Activated CD8-positive, alpha-beta T cell treated with anti-CD3 and anti-CD28 coated beads for 36 hours (primary cell): ENCODE measurements at regions of chr20 and their contacts with region 1.

Region 1: DNA sequence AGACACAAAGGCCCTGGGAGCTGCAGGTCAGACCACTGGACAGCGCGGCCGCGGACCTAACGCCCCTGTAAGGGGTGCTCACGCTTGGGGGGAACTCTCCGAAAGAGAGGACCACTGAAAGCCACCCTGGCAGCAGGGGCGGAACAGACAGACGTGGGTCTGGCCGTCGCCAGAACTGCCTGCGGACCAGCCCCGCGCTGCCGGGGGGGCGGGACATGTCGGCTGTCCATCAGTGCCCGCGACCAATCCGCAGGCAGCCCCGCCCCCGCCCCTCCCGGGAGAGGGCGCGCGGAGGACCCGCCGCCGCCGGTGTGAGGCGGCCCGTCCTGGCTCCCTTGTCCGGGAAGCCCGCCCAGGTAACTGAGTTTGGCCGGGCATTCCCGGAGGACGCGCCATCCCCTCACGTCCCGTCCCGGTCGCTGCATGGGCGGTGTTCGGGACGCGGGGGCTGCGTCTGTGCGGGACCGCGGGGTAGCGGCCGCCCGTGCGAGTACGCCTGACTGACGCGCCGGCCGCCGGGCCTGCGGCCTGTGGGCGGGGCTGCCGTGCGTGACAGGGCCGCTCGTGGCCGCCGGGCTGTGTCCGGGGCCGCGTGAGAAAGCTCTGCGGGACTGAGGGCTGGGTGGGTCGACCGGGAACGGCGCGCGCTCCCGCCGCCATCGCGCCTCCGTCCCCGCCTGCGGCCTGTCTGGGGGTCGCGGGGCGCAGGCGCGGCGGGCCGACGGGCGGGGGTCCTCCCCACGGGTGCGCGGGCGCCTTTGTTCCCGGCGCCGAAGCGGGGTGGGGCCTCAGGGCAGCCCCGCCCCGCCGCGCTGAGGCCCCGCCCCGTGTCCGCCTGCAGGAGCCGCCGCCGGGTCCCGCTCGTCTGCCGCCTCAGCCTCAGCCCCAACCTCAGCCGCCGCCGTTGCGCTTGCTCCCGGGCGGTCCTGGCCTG is at the start of gene PLCG1:
- DNase-seq: peak; percentile 90
- ATAC-seq: peak; percentile 68
- H3K4me3 Mint-ChIP-seq: peak within 1 kb of the TSS; percentile 91
- H3K27ac Mint-ChIP-seq: peak within 1 kb of the TSS; percentile 91
- H3K4me1 Mint-ChIP-seq: peaks cover 64% of the 10 kb centered on the region
- H3K27me3 Mint-ChIP-seq: no peaks in the 10 kb centered on the region
- CTCF ChIP-seq: no peak
- total RNA-seq, gene PLCG1: 259 to 260 TPM

Region 2: DNA sequence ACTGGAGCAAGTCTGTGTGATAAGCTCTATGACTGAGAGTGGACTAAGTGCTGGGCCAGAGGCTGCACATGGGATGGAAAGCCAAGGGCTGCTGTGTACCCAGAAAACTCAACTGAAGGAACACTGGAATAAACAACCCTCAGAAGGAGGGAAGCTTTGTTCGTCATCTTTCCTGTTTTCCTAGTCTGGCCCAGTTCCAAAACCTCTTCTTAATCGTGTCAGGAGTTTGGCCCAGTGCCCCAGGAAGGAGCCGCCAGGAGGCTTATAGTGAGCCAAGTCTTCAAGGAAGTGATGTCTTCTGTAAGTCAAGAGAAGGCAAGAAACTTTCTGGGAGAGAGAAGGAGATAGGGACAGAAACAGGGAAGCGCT is 131.6 kb before region 1 on chr20:
- CTCF ChIA-PET with region 1: no interaction called
- POLR2A ChIA-PET with region 1: no interaction called
- intact Hi-C with region 1: no loop called
- DNase-seq: no peak
- ATAC-seq: no peak
- H3K4me3 Mint-ChIP-seq: no peak overlapping the region
- H3K27ac Mint-ChIP-seq: no peak overlapping the region
- H3K4me1 Mint-ChIP-seq: peaks cover 35% of the 10 kb centered on the region
- H3K27me3 Mint-ChIP-seq: no peaks in the 10 kb centered on the region
- CTCF ChIP-seq: no peak

Region 3: GRCh38 chr20:41125530-41126457 is 11.2 kb before region 1 on chr20:
- CTCF ChIA-PET with region 1: interaction called, 15 read pairs
- POLR2A ChIA-PET with region 1: interaction called, 3 read pairs
- intact Hi-C with region 1: no loop called
- DNase-seq: no peak
- ATAC-seq: no peak
- H3K4me3 Mint-ChIP-seq: no peak overlapping the region
- H3K27ac Mint-ChIP-seq: peak overlapping the region; percentile 46
- H3K4me1 Mint-ChIP-seq: peaks cover 6% of the 10 kb centered on the region
- H3K27me3 Mint-ChIP-seq: no peaks in the 10 kb centered on the region
- CTCF ChIP-seq: no peak

Region 4: GRCh38 chr20:41161886-41162285 is 24.9 kb after region 1 on chr20:
- CTCF ChIA-PET with region 1: interaction called, 209 read pairs
- POLR2A ChIA-PET with region 1: interaction called, 361 read pairs
- intact Hi-C with region 1: loop called (anchors 2 kb)
- DNase-seq: no peak
- ATAC-seq: no peak
- H3K4me3 Mint-ChIP-seq: peak overlapping the region; percentile 25
- H3K27ac Mint-ChIP-seq: peak overlapping the region; percentile 84
- H3K4me1 Mint-ChIP-seq: peaks cover 86% of the 10 kb centered on the region
- H3K27me3 Mint-ChIP-seq: no peaks in the 10 kb centered on the region
- CTCF ChIP-seq: no peak

Region 5: GRCh38 chr20:41173161-41173721 is 36.3 kb after region 1 on chr20:
- CTCF ChIA-PET with region 1: interaction called, 33 read pairs
- POLR2A ChIA-PET with region 1: interaction called, 7 read pairs
- intact Hi-C with region 1: no loop called
- DNase-seq: peak; percentile 75
- ATAC-seq: peak; percentile 74
- H3K4me3 Mint-ChIP-seq: no peak overlapping the region
- H3K27ac Mint-ChIP-seq: peak overlapping the region; percentile 56
- H3K4me1 Mint-ChIP-seq: peaks cover 25% of the 10 kb centered on the region
- H3K27me3 Mint-ChIP-seq: no peaks in the 10 kb centered on the region
- CTCF ChIP-seq: peak; percentile 83

Region 6: GRCh38 chr20:41242807-41243206 is 105.9 kb after region 1 on chr20:
- CTCF ChIA-PET with region 1: interaction called, 13 read pairs
- POLR2A ChIA-PET with region 1: no interaction called
- intact Hi-C with region 1: no loop called
- DNase-seq: peak; percentile 37
- ATAC-seq: peak; percentile 66
- H3K4me3 Mint-ChIP-seq: no peak overlapping the region
- H3K27ac Mint-ChIP-seq: peak overlapping the region; percentile 53
- H3K4me1 Mint-ChIP-seq: peaks cover 18% of the 10 kb centered on the region
- H3K27me3 Mint-ChIP-seq: no peaks in the 10 kb centered on the region
- CTCF ChIP-seq: no peak

Region 7: DNA sequence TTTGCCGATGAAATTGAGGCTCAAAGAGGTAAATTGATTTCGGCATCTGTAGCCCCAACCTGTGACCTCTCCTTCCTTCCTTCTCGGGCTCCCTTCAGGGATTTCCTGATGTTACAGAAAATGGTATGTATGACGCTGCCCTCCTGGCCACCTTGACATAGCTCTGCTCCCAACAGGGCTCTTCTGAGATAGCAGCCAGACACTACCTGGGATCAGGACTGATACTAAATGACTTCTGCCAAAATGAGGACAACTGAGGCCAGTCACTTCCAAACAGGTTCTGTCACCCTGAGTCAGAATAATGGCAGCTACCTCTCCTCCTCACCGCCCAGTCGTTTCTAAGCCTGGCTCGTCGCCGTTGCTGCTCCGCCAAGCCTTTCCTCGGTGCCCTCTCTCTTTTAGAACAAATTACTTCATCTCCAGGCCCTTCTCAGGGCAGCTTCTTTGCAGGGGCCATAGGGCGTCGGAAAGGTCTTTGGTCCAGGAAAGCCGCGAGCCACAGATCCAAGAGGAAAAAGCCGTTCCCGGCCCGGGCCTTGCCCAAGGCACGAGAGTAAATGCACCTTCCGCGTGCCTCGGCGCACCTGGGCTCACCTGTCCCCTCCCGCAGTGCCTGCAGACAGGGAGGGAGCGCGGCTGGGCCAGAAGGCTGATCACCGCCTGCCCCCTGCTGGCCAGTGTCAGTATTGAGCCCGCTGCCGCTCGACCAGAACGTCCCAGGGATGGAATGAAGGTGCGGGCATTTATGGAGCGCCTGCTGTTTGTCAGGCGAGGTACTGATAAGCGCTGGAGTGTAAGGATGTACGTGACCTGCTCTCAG is 202.8 kb after region 1 on chr20:
- CTCF ChIA-PET with region 1: interaction called, 73 read pairs
- POLR2A ChIA-PET with region 1: no interaction called
- intact Hi-C with region 1: loop called (anchors 5 kb)
- DNase-seq: peak; percentile 88
- ATAC-seq: peak; percentile 91
- H3K4me3 Mint-ChIP-seq: peak overlapping the region; percentile 72
- H3K27ac Mint-ChIP-seq: peak overlapping the region; percentile 33
- H3K4me1 Mint-ChIP-seq: peaks cover 7% of the 10 kb centered on the region
- H3K27me3 Mint-ChIP-seq: peaks cover 6% of the 10 kb centered on the region
- CTCF ChIP-seq: peak; percentile 100